Activated naive CD4-positive, alpha-beta T cell treated with anti-CD3 and anti-CD28 coated beads for 36 hours (primary cell): ENCODE measurements at regions of chr10 and their contacts with region 1.

Region 1: GRCh38 chr10:88409236-88409635 is 173.9 kb downstream of the RNLS start:
- DNase-seq: no peak
- H3K4me3 Mint-ChIP-seq: no peak overlapping the region
- H3K27ac Mint-ChIP-seq: no peak overlapping the region
- H3K4me1 Mint-ChIP-seq: peaks cover 8% of the 10 kb centered on the region
- H3K27me3 Mint-ChIP-seq: no peaks in the 10 kb centered on the region

Region 2: GRCh38 chr10:88064608-88065382 is 344.4 kb before region 1 on chr10:
- CTCF ChIA-PET with region 1: no interaction called
- intact Hi-C with region 1: loop called (anchors 1 kb)
- DNase-seq: peak; percentile 34
- H3K4me3 Mint-ChIP-seq: no peak overlapping the region
- H3K27ac Mint-ChIP-seq: no peak overlapping the region
- H3K4me1 Mint-ChIP-seq: peaks cover 68% of the 10 kb centered on the region
- H3K27me3 Mint-ChIP-seq: peaks cover 11% of the 10 kb centered on the region

Region 3: DNA sequence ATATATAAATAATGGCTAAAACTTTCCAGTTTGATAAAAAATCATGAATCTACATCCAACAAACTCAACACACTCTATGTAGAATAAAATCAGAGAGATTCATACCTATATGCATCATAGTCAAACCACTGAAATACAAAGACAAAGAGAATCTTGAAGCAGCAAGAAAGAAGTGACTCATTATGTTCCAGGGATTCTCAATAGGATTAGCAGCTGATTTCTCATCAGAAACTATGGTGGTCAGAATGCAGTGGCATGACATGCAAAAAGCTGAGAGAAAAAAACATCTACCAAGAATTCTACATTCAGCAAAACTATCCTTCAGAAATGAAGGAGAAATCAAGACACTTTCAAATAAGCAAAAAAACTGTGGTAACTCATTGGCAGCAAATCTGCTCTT is 13.6 kb before region 1 on chr10:
- CTCF ChIA-PET with region 1: no interaction called
- intact Hi-C with region 1: no loop called
- DNase-seq: no peak
- H3K4me3 Mint-ChIP-seq: no peak overlapping the region
- H3K27ac Mint-ChIP-seq: no peak overlapping the region
- H3K4me1 Mint-ChIP-seq: peaks cover 13% of the 10 kb centered on the region
- H3K27me3 Mint-ChIP-seq: no peaks in the 10 kb centered on the region